Left ventricle myocardium superior (tissue), 1 donor: ENCODE measurements at regions of chr2 and their contacts with region 1.

Region 1: DNA sequence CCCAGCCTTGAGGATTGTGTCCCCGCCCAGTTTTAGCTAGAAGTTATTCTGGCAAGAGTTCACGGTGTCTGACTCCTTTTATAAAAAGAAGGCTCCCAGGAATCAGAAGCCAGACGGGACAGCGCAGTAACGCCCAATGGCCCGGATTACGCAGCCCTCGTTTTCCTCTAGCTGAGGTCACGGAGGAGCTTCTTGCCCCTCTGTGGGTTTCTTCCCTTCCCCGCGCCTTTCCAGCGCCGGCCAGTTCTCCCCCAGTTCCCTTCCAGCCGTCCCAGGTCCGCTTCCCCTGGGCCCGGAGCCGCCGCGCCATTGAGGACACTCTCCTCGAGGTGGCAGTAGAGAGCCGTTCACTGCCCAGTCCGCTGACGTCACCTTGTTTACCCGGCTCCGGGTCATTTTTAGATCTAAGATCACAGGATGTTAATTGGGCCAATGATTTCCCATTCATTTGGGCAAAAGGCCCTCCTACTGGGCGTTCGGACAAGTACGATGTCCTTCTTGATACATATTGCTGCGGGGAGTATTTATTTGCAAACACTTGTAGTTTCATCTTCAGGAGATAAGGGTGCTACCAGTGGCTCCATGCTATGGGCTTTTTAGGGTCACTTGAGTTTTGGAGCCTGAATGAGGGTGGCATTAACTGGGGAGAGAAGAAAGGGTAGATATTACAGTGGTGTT is 81.5 kb upstream of the PPM1B start:
- DNase-seq: peak; percentile 88
- ATAC-seq: peak; percentile 98

Region 2: DNA sequence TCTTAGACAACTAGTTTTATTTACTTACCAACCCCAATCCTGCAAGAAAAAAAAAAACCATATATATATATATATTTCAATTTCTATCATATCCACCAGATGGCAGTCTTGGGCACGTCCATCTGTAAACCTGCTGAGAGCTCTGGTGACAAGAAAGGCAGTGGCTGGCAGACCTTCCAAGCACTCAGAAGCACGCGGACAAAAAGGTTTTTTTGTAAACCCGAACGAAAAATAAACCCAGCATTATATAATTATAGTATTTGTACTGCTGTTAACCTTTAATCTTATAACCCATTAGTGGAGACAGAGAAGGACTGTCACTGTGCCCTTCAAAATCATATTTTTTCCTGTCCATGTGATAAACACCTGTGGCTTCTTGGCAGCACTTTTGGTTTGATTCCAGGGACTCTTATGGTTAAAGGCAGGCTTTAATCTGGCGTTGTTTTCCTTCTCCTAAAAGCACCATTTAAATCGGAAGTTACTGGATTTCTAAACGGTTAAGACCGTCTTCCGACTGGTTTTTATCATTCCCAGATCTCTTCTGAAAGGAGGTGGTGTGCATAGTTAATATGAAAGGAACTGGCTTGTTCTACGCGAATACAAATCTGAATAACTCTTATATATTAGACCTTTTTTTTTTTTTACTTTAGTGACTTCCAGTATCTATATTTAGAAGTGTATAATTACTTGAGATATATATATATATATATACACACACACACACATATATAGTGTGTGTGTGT is 157.1 kb after region 1 on chr2:
- intact Hi-C with region 1: loop called (anchors 5 kb)
- DNase-seq: peak; percentile 37
- ATAC-seq: peak; percentile 80

Region 3: GRCh38 chr2:44267796-44268648 is 180.8 kb after region 1 on chr2:
- intact Hi-C with region 1: no loop called
- DNase-seq: no peak
- ATAC-seq: peak; percentile 92

Region 4: GRCh38 chr2:44310287-44310686 is 223.1 kb after region 1 on chr2:
- intact Hi-C with region 1: no loop called
- DNase-seq: no peak
- ATAC-seq: no peak